ENCODE measurements at regions of chr15 and their contacts with region 1.

Region 1: GRCh38 chr15:73457334-73457733 is 14.4 kb downstream of the REC114 start:
- DNase-seq: no peak
- ATAC-seq: no peak
- H3K4me3 ChIP-seq: no peak overlapping the region
- H3K4me3 Mint-ChIP-seq: no peak overlapping the region
- H3K27ac ChIP-seq: no peak overlapping the region
- H3K27ac Mint-ChIP-seq: no peak overlapping the region
- H3K4me1 ChIP-seq: no peaks in the 10 kb centered on the region
- H3K4me1 Mint-ChIP-seq: no peaks in the 10 kb centered on the region
- H3K27me3 ChIP-seq: peaks cover 0 to 4% of the 10 kb centered on the region in 2 experiments
- H3K27me3 Mint-ChIP-seq: peaks cover 7 to 22% of the 10 kb centered on the region in 2 donors

Region 2: GRCh38 chr15:72141171-72142084 is 1315.9 kb before region 1 on chr15:
- CTCF ChIA-PET with region 1: interaction called in 1 of 2 experiments, 12 read pairs
- POLR2A ChIA-PET with region 1: no interaction called
- DNase-seq: no peak
- ATAC-seq: no peak
- H3K4me3 ChIP-seq: no peak overlapping the region
- H3K4me3 Mint-ChIP-seq: no peak overlapping the region
- H3K27ac ChIP-seq: no peak overlapping the region
- H3K27ac Mint-ChIP-seq: no peak overlapping the region
- H3K4me1 ChIP-seq: no peaks in the 10 kb centered on the region
- H3K4me1 Mint-ChIP-seq: no peaks in the 10 kb centered on the region
- H3K27me3 ChIP-seq: peaks cover 0 to 3% of the 10 kb centered on the region in 2 experiments
- H3K27me3 Mint-ChIP-seq: no peaks in the 10 kb centered on the region

Region 3: GRCh38 chr15:72966641-72967040 is 490.7 kb before region 1 on chr15:
- CTCF ChIA-PET with region 1: no interaction called
- POLR2A ChIA-PET with region 1: interaction called in 1 of 2 experiments, 10 read pairs
- DNase-seq: no peak
- ATAC-seq: no peak
- H3K4me3 ChIP-seq: no peak overlapping the region
- H3K4me3 Mint-ChIP-seq: no peak overlapping the region
- H3K27ac ChIP-seq: no peak overlapping the region
- H3K27ac Mint-ChIP-seq: no peak overlapping the region
- H3K4me1 ChIP-seq: peaks cover 0 to 32% of the 10 kb centered on the region in 2 experiments
- H3K4me1 Mint-ChIP-seq: peaks cover 0 to 31% (median 10%) of the 10 kb centered on the region in 3 donors
- H3K27me3 ChIP-seq: peaks cover 0 to 5% of the 10 kb centered on the region in 2 experiments
- H3K27me3 Mint-ChIP-seq: peaks cover 21 to 38% of the 10 kb centered on the region in 2 donors

Region 4: GRCh38 chr15:73388256-73388781 is 69.0 kb before region 1 on chr15:
- CTCF ChIA-PET with region 1: no interaction called
- POLR2A ChIA-PET with region 1: no interaction called
- DNase-seq: no peak
- ATAC-seq: no peak
- H3K4me3 ChIP-seq: no peak overlapping the region
- H3K4me3 Mint-ChIP-seq: no peak overlapping the region
- H3K27ac ChIP-seq: no peak overlapping the region
- H3K27ac Mint-ChIP-seq: no peak overlapping the region
- H3K4me1 ChIP-seq: no peaks in the 10 kb centered on the region
- H3K4me1 Mint-ChIP-seq: peaks cover 0 to 4% (median 0%) of the 10 kb centered on the region in 3 donors
- H3K27me3 ChIP-seq: peaks cover 0 to 29% of the 10 kb centered on the region in 2 experiments
- H3K27me3 Mint-ChIP-seq: peaks cover 25 to 36% of the 10 kb centered on the region in 2 donors

Region 5: GRCh38 chr15:74422650-74423430 is 965.5 kb after region 1 on chr15:
- CTCF ChIA-PET with region 1: no interaction called
- POLR2A ChIA-PET with region 1: no interaction called
- DNase-seq: no peak
- ATAC-seq: no peak
- H3K4me3 ChIP-seq: no peak overlapping the region
- H3K4me3 Mint-ChIP-seq: no peak overlapping the region
- H3K27ac ChIP-seq: no peak overlapping the region
- H3K27ac Mint-ChIP-seq: no peak overlapping the region
- H3K4me1 ChIP-seq: peaks cover 0 to 32% of the 10 kb centered on the region in 2 experiments
- H3K4me1 Mint-ChIP-seq: peaks cover 9 to 24% (median 11%) of the 10 kb centered on the region in 3 donors
- H3K27me3 ChIP-seq: no peaks in the 10 kb centered on the region
- H3K27me3 Mint-ChIP-seq: no peaks in the 10 kb centered on the region